ENCODE measurements at regions of chr16 and their contacts with region 1.

Region 1: GRCh38 chr16:29815793-29816693 is at the start of gene PAGR1:
- DNase-seq: peak; percentile 98
- H3K4me3 ChIP-seq: peak within 1 kb of the TSS; percentile 85
- H3K27me3 ChIP-seq: no peaks in the 10 kb centered on the region
- CTCF ChIP-seq: peak; percentile 97
- polyA plus RNA-seq, gene PAGR1: 13.9 and 15.6 TPM in 2 replicates

Region 2: DNA sequence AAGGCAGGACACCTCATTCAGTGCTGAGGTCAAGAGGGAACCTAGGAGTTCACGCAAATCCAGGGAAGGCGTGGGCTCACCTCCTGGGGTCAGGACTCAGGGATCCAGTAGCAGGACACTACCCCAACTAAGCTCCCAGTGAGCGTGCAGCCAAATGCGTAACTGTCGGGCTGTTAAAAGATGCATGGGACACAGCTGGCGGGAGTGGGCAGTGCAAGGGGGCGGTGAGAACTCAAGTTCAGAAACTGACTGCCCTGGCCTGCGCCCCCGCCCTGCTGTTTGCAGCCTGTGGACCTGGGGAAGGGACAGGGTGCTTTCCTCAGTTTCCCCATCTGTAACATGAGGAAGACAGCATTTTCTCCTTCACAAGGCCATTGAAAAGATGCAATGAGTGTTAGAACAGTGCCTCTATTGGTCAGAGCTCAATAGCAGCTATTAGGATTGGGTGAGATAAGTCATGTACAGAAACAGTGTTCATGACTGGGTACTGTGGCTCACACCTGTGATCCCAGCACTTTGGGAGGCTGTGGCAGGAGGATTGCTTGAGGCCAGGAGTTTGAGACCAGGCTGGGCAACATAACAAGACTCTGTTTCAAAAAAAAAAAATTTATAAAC is 26.8 kb after region 1 on chr16:
- CTCF ChIA-PET with region 1: interaction called, 81 read pairs
- POLR2A ChIA-PET with region 1: interaction called, 21 read pairs
- DNase-seq: no peak
- H3K4me3 ChIP-seq: no peak overlapping the region
- H3K27me3 ChIP-seq: no peaks in the 10 kb centered on the region
- CTCF ChIP-seq: no peak

Region 3: DNA sequence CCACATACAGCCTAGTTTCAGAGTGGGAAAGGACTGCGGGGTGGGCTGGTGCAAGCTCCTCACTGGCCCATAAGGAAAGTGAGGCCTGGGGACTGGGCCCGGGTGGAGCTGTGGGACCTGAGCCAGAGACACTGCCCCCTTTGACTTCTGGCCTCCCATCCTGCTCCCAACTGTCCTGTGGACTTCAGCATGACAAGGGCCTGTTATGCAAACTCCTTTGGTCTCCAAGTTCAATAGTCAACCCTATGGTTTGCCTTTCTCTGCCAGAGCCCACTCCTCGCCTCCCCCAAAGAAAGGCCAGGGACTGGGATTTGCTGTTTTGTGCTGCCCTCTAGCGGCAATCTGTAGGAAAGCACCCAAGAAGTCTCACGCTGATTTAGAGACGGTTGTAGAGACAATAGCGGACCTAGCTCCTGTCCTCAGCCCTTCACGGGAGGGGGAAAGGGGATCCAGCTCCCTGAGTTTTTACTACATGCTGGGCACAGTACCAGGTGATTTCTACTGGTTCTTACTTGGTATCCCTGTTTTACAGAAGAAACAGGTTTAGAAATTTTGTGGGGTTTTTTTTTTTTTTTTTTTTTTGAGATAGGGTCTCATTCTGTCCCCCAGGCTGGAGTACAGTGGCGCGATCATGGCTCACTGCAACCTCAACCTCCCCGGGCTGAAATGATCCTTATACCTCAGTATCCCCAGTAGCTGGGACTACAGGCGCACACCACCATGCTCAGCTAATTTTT is 216.2 kb after region 1 on chr16:
- CTCF ChIA-PET with region 1: no interaction called
- POLR2A ChIA-PET with region 1: no interaction called
- DNase-seq: no peak
- H3K4me3 ChIP-seq: no peak overlapping the region
- H3K27me3 ChIP-seq: peaks cover 30% of the 10 kb centered on the region
- CTCF ChIP-seq: peak; percentile 83

Measured in BJ (cell line).